ENCODE measurements at regions of chr2 and their contacts with region 1.

Region 1: GRCh38 chr2:84925724-84926376 is 20.4 kb downstream of the TMSB10 start:
- DNase-seq: peak; percentile 87
- H3K4me3 ChIP-seq: peak overlapping the region in 1 of 3 experiments; percentile 1
- H3K27ac ChIP-seq: no peak overlapping the region
- H3K4me1 ChIP-seq: peaks cover 26% of the 10 kb centered on the region
- H3K27me3 ChIP-seq: no peaks in the 10 kb centered on the region
- CTCF ChIP-seq: peak; percentile 94 to 98
- POLR2A ChIP-seq: no peak

Region 2: GRCh38 chr2:84495539-84496146 is 430.2 kb before region 1 on chr2:
- CTCF ChIA-PET with region 1: interaction called, 7 read pairs
- POLR2A ChIA-PET with region 1: no interaction called
- dilution Hi-C with region 1: no loop called
- intact Hi-C with region 1: loop called (anchors 1 kb)
- DNase-seq: peak; percentile 80
- H3K4me3 ChIP-seq: no peak overlapping the region
- H3K27ac ChIP-seq: peak overlapping the region; percentile 99
- H3K4me1 ChIP-seq: peaks cover 21% of the 10 kb centered on the region
- H3K27me3 ChIP-seq: no peaks in the 10 kb centered on the region
- CTCF ChIP-seq: peak; percentile 38 to 44
- POLR2A ChIP-seq: no peak

Region 3: DNA sequence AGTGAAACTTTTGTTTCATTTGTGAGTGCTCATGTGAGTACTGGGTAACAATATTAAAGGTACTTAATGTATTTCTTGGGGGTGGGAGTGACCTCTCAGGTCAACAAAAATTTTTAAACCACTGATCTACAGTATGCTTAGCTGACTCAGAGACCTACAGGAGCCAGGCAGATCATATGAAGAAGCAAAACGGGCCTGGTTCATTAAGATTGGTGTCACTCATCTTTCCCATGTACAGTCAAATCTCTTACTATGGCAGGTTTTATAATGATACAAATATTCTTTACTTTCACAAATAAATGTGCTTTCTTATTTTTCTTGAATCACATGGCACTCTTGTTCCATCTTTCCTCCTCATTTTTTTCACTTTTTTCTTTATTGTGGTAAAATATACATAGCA is 28.1 kb before region 1 on chr2:
- CTCF ChIA-PET with region 1: interaction called, 13 read pairs
- POLR2A ChIA-PET with region 1: no interaction called
- dilution Hi-C with region 1: no loop called
- intact Hi-C with region 1: no loop called
- DNase-seq: no peak
- H3K4me3 ChIP-seq: no peak overlapping the region
- H3K27ac ChIP-seq: no peak overlapping the region
- H3K4me1 ChIP-seq: peaks cover 21% of the 10 kb centered on the region
- H3K27me3 ChIP-seq: no peaks in the 10 kb centered on the region
- CTCF ChIP-seq: no peak
- POLR2A ChIP-seq: no peak

Region 4: GRCh38 chr2:84946204-84947009 is 20.6 kb after region 1 on chr2:
- CTCF ChIA-PET with region 1: interaction called, 32 read pairs
- POLR2A ChIA-PET with region 1: no interaction called
- dilution Hi-C with region 1: no loop called
- intact Hi-C with region 1: no loop called
- DNase-seq: peak; percentile 61
- H3K4me3 ChIP-seq: no peak overlapping the region
- H3K27ac ChIP-seq: peak overlapping the region; percentile 81
- H3K4me1 ChIP-seq: peaks cover 11% of the 10 kb centered on the region
- H3K27me3 ChIP-seq: no peaks in the 10 kb centered on the region
- CTCF ChIP-seq: no peak
- POLR2A ChIP-seq: peak; percentile 33

Region 5: DNA sequence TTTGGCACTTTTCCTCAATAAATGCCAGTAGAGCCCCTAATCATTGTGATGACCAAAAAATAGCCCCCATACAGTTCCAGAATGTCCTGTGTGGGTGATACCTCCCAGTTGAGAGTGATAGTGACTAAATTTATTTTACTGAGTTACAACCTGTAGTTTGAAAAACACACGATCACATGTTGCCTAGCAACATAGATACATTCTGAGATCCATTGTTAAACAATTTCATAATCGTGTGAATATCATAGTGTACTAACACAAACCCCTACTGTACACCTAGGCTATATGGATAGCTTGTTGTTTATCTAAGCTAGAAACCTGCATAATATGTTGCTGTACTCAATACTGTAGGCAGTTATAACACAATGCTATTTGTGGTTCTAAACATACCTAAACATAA is 75.7 kb after region 1 on chr2:
- CTCF ChIA-PET with region 1: interaction called, 10 read pairs
- POLR2A ChIA-PET with region 1: no interaction called
- dilution Hi-C with region 1: no loop called
- intact Hi-C with region 1: no loop called
- DNase-seq: no peak
- H3K4me3 ChIP-seq: no peak overlapping the region
- H3K27ac ChIP-seq: no peak overlapping the region
- H3K4me1 ChIP-seq: peaks cover 8% of the 10 kb centered on the region
- H3K27me3 ChIP-seq: no peaks in the 10 kb centered on the region
- CTCF ChIP-seq: no peak
- POLR2A ChIP-seq: no peak

Region 6: DNA sequence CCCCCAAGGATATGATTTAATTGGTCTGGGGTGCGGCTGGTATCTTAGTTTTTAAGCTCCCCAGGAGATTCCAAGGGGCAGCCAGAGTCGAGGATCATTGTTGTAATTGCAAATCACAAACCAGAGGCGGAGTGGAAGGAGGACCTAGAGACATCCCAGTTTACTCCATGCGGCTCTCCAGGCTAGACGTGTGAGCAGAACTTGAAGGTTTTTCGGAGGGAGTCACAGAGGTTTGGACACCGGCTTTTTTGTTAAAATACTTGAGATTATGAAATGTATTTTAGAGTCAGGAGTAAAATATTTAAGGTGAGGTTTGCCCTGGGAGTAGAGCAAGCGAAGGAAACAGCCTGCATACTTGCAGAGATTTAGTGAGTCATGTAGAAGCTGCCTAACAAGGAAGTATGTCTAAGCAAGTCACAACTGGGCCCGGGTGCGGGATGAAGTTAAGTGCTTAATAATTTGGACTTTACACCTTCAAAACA is 362.4 kb after region 1 on chr2:
- CTCF ChIA-PET with region 1: interaction called, 10 read pairs
- POLR2A ChIA-PET with region 1: no interaction called
- dilution Hi-C with region 1: no loop called
- intact Hi-C with region 1: no loop called
- DNase-seq: no peak
- H3K4me3 ChIP-seq: no peak overlapping the region
- H3K27ac ChIP-seq: no peak overlapping the region
- H3K4me1 ChIP-seq: no peaks in the 10 kb centered on the region
- H3K27me3 ChIP-seq: no peaks in the 10 kb centered on the region
- CTCF ChIP-seq: no peak
- POLR2A ChIP-seq: no peak